HEK293T (cell line): ENCODE measurements at regions of chr17 and their contacts with region 1.

Region 1: DNA sequence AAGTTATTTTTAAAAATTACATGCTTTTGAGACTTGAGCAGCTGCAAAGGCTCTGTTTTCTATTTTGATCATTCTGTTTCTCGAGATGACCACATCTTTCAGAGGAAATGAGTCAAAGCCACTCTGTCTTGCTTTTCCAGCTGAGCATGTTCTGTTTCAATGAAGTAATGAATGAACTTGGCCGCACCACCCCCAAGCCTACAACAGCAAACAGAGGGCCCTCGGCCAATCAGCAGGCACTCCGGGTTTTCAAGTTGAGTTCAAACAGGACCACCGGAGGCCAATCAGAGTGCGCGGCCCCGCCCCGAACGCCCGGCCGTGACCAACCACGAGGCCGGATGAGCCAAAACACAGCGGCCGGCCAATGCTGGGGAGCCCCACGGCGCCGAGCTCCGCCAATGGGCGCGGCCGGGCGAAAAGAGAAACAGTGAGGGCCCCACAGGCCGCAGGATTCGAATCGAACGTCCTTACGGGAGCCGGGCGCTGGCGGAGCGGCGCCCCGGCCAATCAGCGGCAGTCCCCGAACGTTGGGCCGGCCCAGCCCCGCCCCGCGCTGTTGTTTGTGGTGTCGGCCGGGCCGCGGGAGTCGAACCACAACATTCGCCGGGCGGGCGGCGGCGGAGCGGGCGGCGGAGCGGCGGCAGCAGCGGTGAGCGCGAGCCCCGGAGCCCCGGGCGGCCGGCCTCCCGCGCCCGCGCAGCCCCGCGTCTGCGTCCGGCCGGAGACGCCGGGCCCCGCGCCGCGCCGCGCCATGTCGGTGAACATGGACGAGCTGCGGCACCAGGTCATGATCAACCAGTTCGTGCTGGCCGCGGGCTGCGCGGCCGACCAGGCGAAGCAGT is at the start of gene UBALD2:
- DNase-seq: peak; percentile 95

Region 2: DNA sequence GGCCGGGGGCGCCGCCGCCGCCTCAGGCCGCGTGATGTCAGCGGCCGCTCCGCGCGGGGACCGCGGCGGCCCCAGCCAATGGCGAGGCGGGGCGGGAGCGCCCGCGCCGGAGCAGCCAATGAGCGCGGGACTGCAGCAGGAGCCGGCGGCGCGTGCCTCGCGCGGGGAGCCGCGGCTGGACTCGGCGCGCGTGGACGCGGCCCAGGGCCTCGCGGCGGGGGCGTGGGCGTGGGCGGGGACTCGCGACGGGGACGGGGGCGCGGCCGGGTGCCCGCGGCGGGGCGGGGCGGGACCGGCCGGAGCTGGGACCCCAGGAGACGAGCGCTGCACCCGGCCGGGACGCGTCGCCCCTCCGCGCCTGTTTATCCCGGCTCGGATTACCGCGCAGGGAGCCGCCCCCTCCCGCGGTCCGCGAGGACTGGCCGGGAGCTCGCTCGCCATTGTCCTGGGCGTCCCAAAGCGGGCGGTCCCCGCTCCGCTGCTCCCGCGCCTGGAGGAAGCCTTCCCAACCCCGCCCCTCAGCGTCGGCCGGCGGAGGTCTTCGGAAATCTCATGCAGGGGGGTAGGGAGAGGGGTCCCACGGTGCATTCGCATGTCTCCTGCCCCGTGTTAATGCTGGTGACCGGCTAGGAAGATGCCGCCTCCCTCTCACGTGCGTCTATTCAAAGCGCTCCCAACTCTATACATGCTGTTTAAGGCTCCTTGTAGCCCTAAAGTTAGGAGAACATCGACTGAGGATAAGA is 24.3 kb before region 1 on chr17 and contains the start of gene RNF157:
- CTCF ChIA-PET with region 1: interaction called, 3 read pairs
- POLR2A ChIA-PET with region 1: interaction called, 24 read pairs
- DNase-seq: peak; percentile 84

Region 3: DNA sequence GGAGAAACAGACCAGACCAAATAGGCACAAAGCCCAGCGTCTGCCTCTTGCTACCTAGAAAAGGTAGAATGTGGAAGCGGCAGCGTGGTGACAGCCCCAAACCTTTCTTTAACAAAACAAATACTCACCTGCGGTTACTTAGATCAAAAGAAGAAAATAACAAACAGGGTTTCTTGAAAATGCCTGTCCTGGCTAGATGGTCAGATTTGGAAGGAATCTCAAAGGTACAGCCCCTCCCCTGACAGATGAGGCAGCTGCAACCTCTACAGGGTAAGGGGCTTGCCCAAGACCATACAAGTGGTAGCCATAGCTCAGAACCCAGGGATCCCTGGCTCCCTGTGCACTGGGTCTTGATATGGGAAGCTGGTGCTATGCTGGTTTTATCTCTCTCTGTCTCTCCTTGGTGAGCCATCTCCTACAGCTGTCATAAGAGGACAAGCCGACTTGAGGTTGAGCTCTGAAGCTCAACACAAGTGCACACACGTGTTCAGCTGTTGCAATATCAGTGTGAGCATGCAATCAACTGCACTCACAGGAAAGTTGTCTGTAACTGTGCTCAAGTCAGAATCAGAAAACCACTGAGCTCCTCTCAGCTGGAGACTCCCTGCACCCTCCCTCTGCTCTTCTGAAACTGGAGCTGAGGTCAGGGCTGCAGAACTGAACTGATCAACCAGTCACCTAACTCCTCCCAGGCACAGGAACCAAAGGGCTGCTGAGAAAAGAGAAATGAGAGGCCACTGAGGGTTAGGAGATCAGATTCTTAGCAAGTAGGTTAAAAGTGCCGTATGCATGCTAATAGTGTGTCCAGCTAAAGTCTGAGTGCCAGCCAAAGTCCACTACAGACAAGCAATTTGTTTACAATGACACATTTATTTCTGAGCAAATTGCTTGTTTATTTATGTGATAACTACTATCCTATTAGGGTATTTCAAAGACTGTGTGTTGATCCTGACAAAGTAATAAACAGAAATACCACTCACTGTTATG is 18.6 kb before region 1 on chr17:
- CTCF ChIA-PET with region 1: interaction called, 3 read pairs
- POLR2A ChIA-PET with region 1: interaction called, 24 read pairs
- DNase-seq: peak; percentile 38

Region 4: DNA sequence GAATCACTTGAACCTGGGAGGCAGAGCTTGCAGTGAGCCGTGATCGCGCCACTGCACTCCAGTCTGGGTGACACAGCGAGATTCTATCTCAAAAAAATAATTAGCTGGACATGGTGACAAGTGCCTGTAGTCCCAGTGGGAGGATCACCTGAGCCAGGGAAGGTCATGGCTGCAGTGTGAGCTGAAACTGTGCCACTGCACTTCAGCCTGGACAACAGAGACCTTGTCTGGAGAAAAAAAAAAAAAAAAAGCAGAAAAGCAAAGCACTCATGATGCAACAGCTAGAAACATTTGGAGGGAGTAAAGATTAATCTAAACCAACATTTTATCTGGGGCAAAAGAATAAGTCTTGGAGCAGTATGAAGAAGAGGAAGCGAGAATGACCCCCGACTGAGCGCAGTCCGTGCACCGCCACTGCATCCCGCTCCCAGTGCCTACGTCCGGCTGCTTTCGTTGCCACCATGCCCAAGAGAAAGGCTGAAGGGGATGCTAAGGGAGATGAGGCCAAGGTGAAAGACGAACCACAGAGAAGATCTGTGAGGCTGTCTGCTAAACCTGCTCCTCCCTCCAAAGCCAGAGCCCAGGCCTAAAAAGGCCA is 80.5 kb after region 1 on chr17:
- CTCF ChIA-PET with region 1: no interaction called
- POLR2A ChIA-PET with region 1: no interaction called
- DNase-seq: no peak